ENCODE measurements at regions of chr22 and their contacts with region 1.

Region 1: GRCh38 chr22:42050641-42051180 is 19.9 kb downstream of the NAGA start:
- DNase-seq: no peak
- ATAC-seq: no peak
- H3K4me3 ChIP-seq: no peak overlapping the region
- H3K27ac ChIP-seq: no peak overlapping the region
- H3K4me1 ChIP-seq: no peaks in the 10 kb centered on the region
- H3K27me3 ChIP-seq: no peaks in the 10 kb centered on the region
- CTCF ChIP-seq: no peak
- POLR2A ChIP-seq: no peak
- RAD21 ChIP-seq: no peak

Region 2: GRCh38 chr22:41888627-41889200 is 162.0 kb before region 1 on chr22:
- CTCF ChIA-PET with region 1: no interaction called
- POLR2A ChIA-PET with region 1: no interaction called
- RAD21 ChIA-PET with region 1: no interaction called
- intact Hi-C with region 1: no loop called
- DNase-seq: no peak
- ATAC-seq: no peak
- H3K4me3 ChIP-seq: no peak overlapping the region
- H3K27ac ChIP-seq: no peak overlapping the region
- H3K4me1 ChIP-seq: no peaks in the 10 kb centered on the region
- H3K27me3 ChIP-seq: no peaks in the 10 kb centered on the region
- CTCF ChIP-seq: no peak
- POLR2A ChIP-seq: no peak
- RAD21 ChIP-seq: no peak

Region 3: DNA sequence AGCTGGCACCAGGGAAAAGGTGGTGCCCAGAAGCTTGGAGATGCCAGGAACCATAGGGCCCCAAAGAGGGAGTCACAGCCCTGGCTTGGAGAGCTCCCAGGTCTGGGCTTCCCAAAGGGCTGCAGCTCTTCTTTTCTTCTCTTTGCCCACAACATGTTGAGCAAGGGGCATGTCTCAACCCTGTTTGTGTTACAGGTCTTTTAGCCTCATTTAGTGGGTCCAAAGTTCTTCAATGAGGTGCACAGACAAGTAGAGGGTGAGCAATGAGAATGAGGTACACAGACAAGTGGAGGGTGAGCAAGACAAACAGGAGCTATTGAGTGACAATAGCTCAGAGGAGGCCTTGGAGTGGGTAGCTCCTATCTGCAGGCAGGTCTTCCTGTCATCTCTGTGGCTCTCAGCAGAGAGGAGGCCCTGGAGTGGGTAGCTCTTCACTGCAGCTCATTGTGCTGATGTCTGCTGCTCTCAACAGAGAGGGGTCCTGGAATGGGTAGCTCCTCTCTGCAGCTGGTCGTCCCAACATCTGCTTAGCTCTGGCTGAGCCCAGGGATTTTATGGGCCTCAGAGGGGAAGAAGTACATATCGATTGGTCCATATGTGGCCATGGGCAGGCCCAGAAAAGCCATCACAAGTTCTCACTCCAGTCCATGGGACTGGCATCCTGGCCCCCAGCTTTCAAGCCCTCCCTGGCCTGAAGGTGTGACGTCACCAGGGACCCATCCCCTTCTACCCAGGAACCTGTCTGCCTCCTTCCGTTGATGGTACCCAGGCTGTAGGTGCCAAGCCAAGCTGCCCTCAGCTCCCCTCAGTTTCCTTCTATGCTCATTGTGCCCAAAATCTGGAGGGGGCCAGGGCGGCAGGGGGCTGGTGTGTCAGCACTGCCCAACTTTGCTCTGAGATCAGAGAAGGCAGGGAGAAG is 17.2 kb before region 1 on chr22:
- CTCF ChIA-PET with region 1: no interaction called
- POLR2A ChIA-PET with region 1: interaction called, 3 read pairs
- RAD21 ChIA-PET with region 1: no interaction called
- intact Hi-C with region 1: loop called (anchors 1 kb)
- DNase-seq: no peak
- ATAC-seq: no peak
- H3K4me3 ChIP-seq: no peak overlapping the region
- H3K27ac ChIP-seq: no peak overlapping the region
- H3K4me1 ChIP-seq: no peaks in the 10 kb centered on the region
- H3K27me3 ChIP-seq: no peaks in the 10 kb centered on the region
- CTCF ChIP-seq: no peak
- POLR2A ChIP-seq: no peak
- RAD21 ChIP-seq: no peak

Region 4: GRCh38 chr22:42160830-42161696 is 110.4 kb after region 1 on chr22:
- CTCF ChIA-PET with region 1: no interaction called
- POLR2A ChIA-PET with region 1: no interaction called
- RAD21 ChIA-PET with region 1: no interaction called
- intact Hi-C with region 1: no loop called
- DNase-seq: peak; percentile 34
- ATAC-seq: peak; percentile 68
- H3K4me3 ChIP-seq: no peak overlapping the region
- H3K27ac ChIP-seq: no peak overlapping the region
- H3K4me1 ChIP-seq: peaks cover 3 to 29% of the 10 kb centered on the region in 2 experiments; a peak in 3 of 4 replicates
- H3K27me3 ChIP-seq: no peaks in the 10 kb centered on the region
- CTCF ChIP-seq: no peak
- POLR2A ChIP-seq: no peak
- RAD21 ChIP-seq: no peak